BJ (cell line): ENCODE measurements at regions of chr19 and their contacts with region 1.

Region 1: GRCh38 chr19:506404-507285 is 652 bp upstream of the TPGS1 start:
- DNase-seq: peak; percentile 100
- H3K4me3 ChIP-seq: peak overlapping the region; percentile 98
- H3K27me3 ChIP-seq: no peaks in the 10 kb centered on the region
- CTCF ChIP-seq: peak; percentile 99

Region 2: DNA sequence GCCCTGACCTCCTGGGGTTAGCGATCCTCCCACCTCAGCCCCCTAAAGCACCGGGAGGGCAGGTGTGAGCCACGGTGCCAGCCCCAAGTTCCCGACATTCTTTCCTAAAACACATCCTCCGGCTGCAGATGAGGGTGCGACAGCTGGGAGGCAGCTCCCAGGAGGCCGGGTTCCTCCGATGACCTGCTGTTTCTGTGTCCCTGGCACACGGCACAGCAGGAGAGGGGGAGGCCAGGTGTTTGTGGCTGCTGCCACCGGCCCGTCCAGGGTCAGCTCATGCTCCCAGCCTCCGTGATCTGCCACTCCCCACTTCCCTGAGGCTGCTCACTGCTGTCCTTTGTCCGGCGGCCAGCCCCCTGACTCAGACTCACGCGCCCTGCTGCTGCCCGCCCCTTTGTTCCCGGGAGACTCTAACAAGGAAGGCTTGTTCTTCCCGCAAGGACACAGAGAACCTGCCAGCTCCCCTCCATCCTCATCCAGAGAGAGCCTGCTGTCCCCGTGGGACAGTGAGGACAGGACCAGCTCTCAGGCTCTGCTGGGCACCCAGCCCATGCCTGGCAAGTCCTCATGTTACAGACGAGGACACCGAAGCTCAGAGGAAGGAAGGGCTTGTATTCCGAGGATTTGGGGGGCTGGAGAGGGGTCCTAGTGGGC is 20.9 kb before region 1 on chr19:
- CTCF ChIA-PET with region 1: interaction called, 11 read pairs
- POLR2A ChIA-PET with region 1: no interaction called
- DNase-seq: no peak
- H3K4me3 ChIP-seq: no peak overlapping the region
- H3K27me3 ChIP-seq: peaks cover 2% of the 10 kb centered on the region; the same call in 1 of the 2 replicates
- CTCF ChIP-seq: no peak

Region 3: GRCh38 chr19:495402-496186 is 11.1 kb before region 1 on chr19:
- CTCF ChIA-PET with region 1: interaction called, 16 read pairs
- POLR2A ChIA-PET with region 1: no interaction called
- DNase-seq: no peak
- H3K4me3 ChIP-seq: no peak overlapping the region
- H3K27me3 ChIP-seq: peaks cover 11% of the 10 kb centered on the region
- CTCF ChIP-seq: peak; percentile 76

Region 4: DNA sequence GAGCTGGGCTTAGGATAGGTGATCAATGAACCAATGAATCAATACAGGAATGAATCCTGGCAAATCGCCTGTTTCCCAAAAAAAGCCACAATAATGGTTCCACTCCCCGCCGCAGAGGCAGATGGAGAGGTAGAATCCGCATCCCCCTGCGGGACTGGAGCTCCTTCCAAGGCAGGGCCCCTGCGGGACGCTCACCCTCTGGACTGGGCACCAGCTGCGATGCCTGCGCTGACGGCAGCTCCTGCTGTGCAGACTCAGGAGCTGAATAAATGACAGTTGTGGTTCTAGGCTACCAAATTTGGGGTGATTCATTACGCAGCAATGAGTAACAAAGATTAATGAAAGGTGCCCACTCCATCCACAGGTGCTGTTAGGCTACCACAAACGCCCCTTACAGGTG is 16.1 kb after region 1 on chr19:
- CTCF ChIA-PET with region 1: interaction called, 18 read pairs
- POLR2A ChIA-PET with region 1: no interaction called
- DNase-seq: no peak
- H3K4me3 ChIP-seq: no peak overlapping the region
- H3K27me3 ChIP-seq: peaks cover 2% of the 10 kb centered on the region; the same call in 1 of the 2 replicates
- CTCF ChIP-seq: no peak

Region 5: DNA sequence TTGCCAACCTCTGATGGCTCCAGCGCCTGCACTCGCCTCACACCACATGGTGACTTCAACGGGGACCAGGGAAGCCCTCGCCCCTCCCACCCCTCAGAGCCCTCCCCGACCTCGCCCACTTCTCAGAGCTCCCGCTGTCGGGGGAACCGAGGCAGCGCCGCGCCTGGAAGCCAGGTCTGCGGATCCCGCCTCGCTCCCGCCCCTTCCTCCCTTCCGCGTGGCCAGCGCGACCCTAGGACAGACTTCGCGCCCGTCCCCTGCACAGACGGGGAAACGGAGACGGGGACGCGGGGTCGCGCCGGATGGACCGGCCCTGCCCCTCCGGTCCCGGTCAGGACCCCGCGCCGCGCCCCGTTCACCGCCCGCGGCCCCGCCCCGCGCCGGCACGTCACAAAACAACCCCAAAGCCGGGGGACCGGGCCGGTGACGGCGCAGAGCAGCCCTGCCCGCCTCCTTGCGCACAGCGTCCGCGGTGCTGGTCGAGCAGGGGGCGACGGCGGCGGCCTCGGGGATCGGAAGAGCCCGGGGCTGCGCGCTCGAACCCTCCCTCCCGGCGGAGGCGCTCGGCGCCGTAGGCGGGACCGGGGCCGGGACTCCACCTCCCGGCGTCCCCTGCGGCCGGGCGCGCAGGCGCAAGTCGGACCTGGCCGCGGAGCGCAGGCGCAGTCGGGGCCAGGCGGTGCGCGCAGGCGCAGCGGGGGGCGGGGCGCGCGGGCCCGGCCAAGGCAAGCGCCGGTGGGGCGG is 24.5 kb after region 1 on chr19:
- CTCF ChIA-PET with region 1: interaction called, 34 read pairs
- POLR2A ChIA-PET with region 1: no interaction called
- DNase-seq: no peak
- H3K4me3 ChIP-seq: peak overlapping the region; percentile 98
- H3K27me3 ChIP-seq: no peaks in the 10 kb centered on the region
- CTCF ChIP-seq: no peak; the same call in 1 of the 2 replicates